Activated CD4-positive, alpha-beta T cell treated with anti-CD3 and anti-CD28 coated beads for 36 hours (primary cell): ENCODE measurements at regions of chr3 and their contacts with region 1.

Region 1: DNA sequence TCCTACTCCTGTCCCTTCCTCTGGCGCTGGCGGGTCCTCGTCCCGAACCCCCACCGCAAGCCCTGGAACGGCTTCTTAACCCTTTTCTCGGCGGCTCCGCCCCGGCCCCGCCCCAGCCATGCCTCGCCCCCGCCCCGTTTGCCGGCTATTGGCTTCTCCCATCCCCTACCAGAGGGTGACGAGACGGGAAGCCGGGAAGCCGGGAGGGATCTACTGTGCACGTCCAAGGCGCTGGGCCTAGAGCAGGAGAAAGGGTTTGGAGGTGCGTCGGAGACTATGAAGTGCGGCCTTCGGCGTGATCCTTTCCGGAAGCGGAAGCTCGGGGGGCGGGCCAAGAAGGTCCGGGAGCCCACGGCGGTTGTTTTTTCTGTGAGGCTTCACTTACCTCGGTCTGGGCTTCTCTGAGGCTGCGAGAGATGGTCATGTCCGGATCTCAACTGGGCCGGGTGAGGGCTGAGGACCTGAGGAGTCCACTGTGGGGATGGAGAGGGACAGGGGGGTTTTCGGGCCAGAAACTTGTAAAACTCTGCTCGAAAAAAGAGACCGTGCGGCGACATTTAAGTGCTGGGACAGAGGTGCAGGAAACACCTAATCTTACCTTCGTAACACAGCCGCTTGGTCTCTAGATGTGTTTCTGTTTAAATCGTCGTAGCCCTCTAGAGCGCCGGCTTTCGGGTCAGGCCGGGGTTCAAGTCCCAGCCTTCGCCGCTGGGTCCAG is 21.4 kb downstream of the ROPN1B start:
- DNase-seq: peak; percentile 87
- ATAC-seq: peak; percentile 94
- H3K4me3 Mint-ChIP-seq: peak overlapping the region; percentile 97
- H3K27ac Mint-ChIP-seq: peak overlapping the region; percentile 96
- H3K4me1 Mint-ChIP-seq: peaks cover 25% of the 10 kb centered on the region
- H3K27me3 Mint-ChIP-seq: no peaks in the 10 kb centered on the region

Region 2: GRCh38 chr3:125594581-125595011 is 395.8 kb before region 1 on chr3:
- CTCF ChIA-PET with region 1: no interaction called
- POLR2A ChIA-PET with region 1: no interaction called
- intact Hi-C with region 1: loop called in 1 of 2 experiments (anchors 5 kb)
- DNase-seq: peak; percentile 42
- ATAC-seq: no peak
- H3K4me3 Mint-ChIP-seq: peak overlapping the region; percentile 92
- H3K27ac Mint-ChIP-seq: peak overlapping the region; percentile 91
- H3K4me1 Mint-ChIP-seq: peaks cover 24% of the 10 kb centered on the region
- H3K27me3 Mint-ChIP-seq: no peaks in the 10 kb centered on the region

Region 3: DNA sequence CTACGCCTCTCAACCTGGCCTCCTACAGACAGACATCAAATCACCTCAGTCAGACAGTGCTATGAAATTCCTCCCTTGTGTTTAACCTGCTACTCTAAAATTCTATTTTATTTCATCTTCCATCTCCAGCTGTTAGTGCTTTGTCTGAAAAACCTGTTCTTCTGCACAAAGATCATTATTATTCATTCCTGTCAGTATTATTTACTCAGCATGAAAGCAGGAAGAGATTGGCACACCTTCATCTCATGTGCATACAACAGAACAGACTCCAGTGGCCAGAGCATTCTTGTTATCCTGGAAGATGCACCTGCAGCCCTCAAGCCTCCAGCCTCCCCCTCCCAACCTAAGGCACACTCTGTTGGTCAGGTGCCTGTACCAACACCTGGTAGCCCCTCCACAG is 23.3 kb before region 1 on chr3:
- CTCF ChIA-PET with region 1: interaction called, 3 read pairs
- POLR2A ChIA-PET with region 1: no interaction called
- intact Hi-C with region 1: loop called in 1 of 2 experiments (anchors 1 kb)
- DNase-seq: no peak
- ATAC-seq: no peak
- H3K4me3 Mint-ChIP-seq: no peak overlapping the region
- H3K27ac Mint-ChIP-seq: no peak overlapping the region
- H3K4me1 Mint-ChIP-seq: peaks cover 4% of the 10 kb centered on the region
- H3K27me3 Mint-ChIP-seq: peaks cover 17% of the 10 kb centered on the region

Region 4: GRCh38 chr3:126003447-126004280 is 13.3 kb after region 1 on chr3:
- CTCF ChIA-PET with region 1: interaction called, 3 read pairs
- POLR2A ChIA-PET with region 1: no interaction called
- intact Hi-C with region 1: loop called (anchors 1 kb)
- DNase-seq: no peak
- ATAC-seq: no peak
- H3K4me3 Mint-ChIP-seq: no peak overlapping the region
- H3K27ac Mint-ChIP-seq: no peak overlapping the region
- H3K4me1 Mint-ChIP-seq: no peaks in the 10 kb centered on the region
- H3K27me3 Mint-ChIP-seq: no peaks in the 10 kb centered on the region

Region 5: GRCh38 chr3:126357295-126358037 is 367.1 kb after region 1 on chr3 and contains the start of gene KLF15:
- CTCF ChIA-PET with region 1: no interaction called
- POLR2A ChIA-PET with region 1: interaction called, 6 read pairs
- intact Hi-C with region 1: loop called in 1 of 2 experiments (anchors 2 kb)
- DNase-seq: peak; percentile 87
- ATAC-seq: peak; percentile 95
- H3K4me3 Mint-ChIP-seq: peak within 1 kb of the TSS; percentile 73
- H3K27ac Mint-ChIP-seq: no peak within 1 kb of the TSS
- H3K4me1 Mint-ChIP-seq: peaks cover 9% of the 10 kb centered on the region
- H3K27me3 Mint-ChIP-seq: peaks cover 44% of the 10 kb centered on the region
- total RNA-seq, gene KLF15: 0.32 to 0.53 TPM